ENCODE measurements at regions of chr12 and their contacts with region 1.

Region 1: DNA sequence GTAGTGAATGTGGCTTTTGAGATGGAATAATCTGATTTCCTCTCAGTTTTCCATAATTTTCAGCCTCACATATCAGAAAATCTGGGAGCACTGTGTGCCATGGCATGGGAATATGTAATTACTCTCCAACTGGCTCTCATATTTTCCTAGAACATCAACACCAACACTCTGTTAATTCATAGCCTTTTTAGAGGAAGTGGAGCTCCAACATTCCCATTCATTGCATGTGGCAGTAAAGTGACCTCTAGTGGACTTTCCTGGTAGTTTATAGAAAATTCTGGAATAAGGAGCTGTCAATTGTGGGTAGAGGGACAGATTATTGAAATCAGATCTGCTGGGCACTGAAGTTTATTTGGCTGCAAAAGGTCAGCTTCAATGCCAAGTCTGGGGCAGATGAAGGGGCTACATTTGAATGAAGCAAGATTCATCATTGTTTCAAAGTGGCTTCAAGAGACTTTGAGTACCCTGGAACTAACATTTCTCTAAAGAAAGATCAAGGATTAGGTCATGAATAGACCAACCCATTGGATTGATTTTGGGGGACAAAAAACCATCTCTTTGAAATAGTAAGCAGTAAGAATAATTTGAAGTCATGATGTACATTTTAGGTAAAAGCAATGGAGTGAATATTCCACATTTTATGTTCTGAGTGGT is 23.6 kb upstream of the USP44 start:
- DNase-seq: no peak
- H3K4me3 ChIP-seq: no peak overlapping the region
- H3K27ac ChIP-seq: no peak overlapping the region
- H3K27me3 ChIP-seq: no peaks in the 10 kb centered on the region
- CTCF ChIP-seq: peak; percentile 83

Region 2: DNA sequence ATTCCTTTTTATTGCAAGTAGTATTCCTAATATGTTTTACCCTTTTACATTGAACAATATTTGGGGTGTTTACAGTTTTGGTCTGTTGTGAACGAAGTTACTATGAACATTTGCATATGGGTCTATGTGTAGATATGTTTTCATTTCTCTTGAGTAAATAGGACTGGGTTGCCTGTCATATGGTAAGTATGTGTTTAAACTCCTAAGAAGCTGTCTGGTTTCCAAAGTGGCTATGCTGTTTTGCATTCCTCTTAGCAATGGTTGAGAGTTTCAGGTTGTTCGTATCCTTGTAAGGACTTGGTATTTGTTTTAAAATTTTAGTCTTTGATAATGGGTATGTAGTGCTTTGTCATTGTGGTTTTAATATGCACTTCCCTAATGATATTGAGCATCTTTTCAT is 94.7 kb before region 1 on chr12:
- CTCF ChIA-PET with region 1: no interaction called
- POLR2A ChIA-PET with region 1: no interaction called
- DNase-seq: no peak
- H3K4me3 ChIP-seq: no peak overlapping the region
- H3K27ac ChIP-seq: no peak overlapping the region
- H3K27me3 ChIP-seq: no peaks in the 10 kb centered on the region
- CTCF ChIP-seq: no peak

Region 3: GRCh38 chr12:95532851-95533250 is 42.1 kb before region 1 on chr12:
- CTCF ChIA-PET with region 1: interaction called, 11 read pairs
- POLR2A ChIA-PET with region 1: interaction called, 3 read pairs
- DNase-seq: no peak
- H3K4me3 ChIP-seq: no peak overlapping the region
- H3K27ac ChIP-seq: no peak overlapping the region
- H3K27me3 ChIP-seq: no peaks in the 10 kb centered on the region
- CTCF ChIP-seq: no peak

Region 4: DNA sequence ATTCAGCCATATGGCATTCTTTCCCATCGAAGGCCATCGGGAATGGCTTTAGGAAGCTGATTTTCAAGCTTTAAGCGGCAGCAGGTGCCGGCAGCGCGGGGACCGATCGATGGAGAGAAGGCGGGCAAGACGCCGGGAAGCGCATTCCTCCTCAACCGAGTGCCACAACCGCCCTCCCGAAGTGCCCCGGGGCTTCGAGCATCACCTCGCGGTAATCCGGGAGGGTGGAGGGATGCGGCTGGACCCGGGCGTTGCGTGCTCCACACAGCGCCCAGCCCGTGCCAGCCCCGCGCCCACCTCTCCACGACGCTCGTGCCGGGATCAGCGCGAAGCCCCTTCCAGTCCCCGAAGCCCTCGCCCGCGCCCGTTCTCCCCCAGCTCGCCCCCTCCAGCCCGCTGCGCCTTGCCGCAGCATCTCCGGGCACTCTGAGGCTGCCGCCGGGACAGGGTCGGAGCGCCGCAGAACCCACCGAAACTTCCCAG is 26.8 kb before region 1 on chr12:
- CTCF ChIA-PET with region 1: interaction called, 24 read pairs
- POLR2A ChIA-PET with region 1: no interaction called
- DNase-seq: no peak
- H3K4me3 ChIP-seq: peak overlapping the region; percentile 84
- H3K27ac ChIP-seq: peak overlapping the region; percentile 99
- H3K27me3 ChIP-seq: no peaks in the 10 kb centered on the region
- CTCF ChIP-seq: no peak

Region 5: DNA sequence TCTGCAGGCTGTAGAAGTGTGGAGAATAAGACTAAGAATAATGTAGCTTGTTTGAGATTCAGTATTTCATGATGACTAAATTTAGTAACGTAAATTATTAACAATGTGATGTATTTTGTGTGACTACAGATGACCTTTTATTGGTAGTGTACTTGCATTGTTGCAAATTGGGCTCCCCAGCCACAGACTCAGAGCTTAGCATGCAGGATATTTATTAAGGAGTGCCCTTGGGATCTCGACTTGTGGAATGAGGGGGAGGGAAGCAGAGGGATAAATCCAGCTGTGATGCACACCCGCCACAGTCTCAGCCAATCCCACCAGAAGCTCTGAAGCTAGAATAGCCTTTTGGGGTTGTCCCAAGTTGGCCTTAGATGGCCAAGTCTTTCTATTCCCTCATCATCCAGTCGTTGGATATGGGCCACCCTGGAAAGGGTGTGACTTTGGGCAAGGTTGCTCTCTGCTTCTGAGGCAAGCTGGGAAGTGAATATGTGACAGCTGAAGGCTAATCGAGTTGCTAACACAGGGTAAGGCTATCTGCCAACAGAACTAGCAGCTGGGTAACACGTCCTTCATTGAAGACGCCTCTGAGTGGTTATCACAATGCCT is 18.4 kb after region 1 on chr12:
- CTCF ChIA-PET with region 1: interaction called, 23 read pairs
- POLR2A ChIA-PET with region 1: no interaction called
- DNase-seq: no peak
- H3K4me3 ChIP-seq: no peak overlapping the region
- H3K27ac ChIP-seq: no peak overlapping the region
- H3K27me3 ChIP-seq: no peaks in the 10 kb centered on the region
- CTCF ChIP-seq: no peak